B cell (primary cell): ENCODE measurements at regions of chr6 and their contacts with region 1.

Region 1: GRCh38 chr6:90315354-90315950 is 18.8 kb upstream of the BACH2 start:
- DNase-seq: peak; percentile 84
- ATAC-seq: peak; percentile 85
- H3K4me3 ChIP-seq: peak overlapping the region in 3 of 5 experiments; percentile 16 to 40 (median 22)
- H3K4me3 Mint-ChIP-seq: peak overlapping the region; percentile 54
- H3K27ac ChIP-seq: peak overlapping the region; percentile 95
- H3K27ac Mint-ChIP-seq: peak overlapping the region; percentile 83
- H3K4me1 ChIP-seq: peaks cover 70 to 76% of the 10 kb centered on the region in 2 donors
- H3K4me1 Mint-ChIP-seq: peaks cover 71% of the 10 kb centered on the region
- H3K27me3 ChIP-seq: no peaks in the 10 kb centered on the region
- H3K27me3 Mint-ChIP-seq: no peaks in the 10 kb centered on the region
- CTCF ChIP-seq: no peak

Region 2: GRCh38 chr6:90015883-90016282 is 299.6 kb before region 1 on chr6:
- CTCF ChIA-PET with region 1: no interaction called
- POLR2A ChIA-PET with region 1: no interaction called
- intact Hi-C with region 1: no loop called
- DNase-seq: no peak
- ATAC-seq: no peak
- H3K4me3 ChIP-seq: no peak overlapping the region
- H3K4me3 Mint-ChIP-seq: no peak overlapping the region
- H3K27ac ChIP-seq: peak overlapping the region in 1 of 2 donors; percentile 21
- H3K27ac Mint-ChIP-seq: no peak overlapping the region
- H3K4me1 ChIP-seq: peaks cover 13 to 20% of the 10 kb centered on the region in 2 donors
- H3K4me1 Mint-ChIP-seq: peaks cover 23% of the 10 kb centered on the region
- H3K27me3 ChIP-seq: no peaks in the 10 kb centered on the region
- H3K27me3 Mint-ChIP-seq: no peaks in the 10 kb centered on the region
- CTCF ChIP-seq: no peak

Region 3: GRCh38 chr6:90028995-90029635 is 286.3 kb before region 1 on chr6:
- CTCF ChIA-PET with region 1: no interaction called
- POLR2A ChIA-PET with region 1: no interaction called
- intact Hi-C with region 1: no loop called
- DNase-seq: no peak
- ATAC-seq: no peak
- H3K4me3 ChIP-seq: no peak overlapping the region
- H3K4me3 Mint-ChIP-seq: no peak overlapping the region
- H3K27ac ChIP-seq: no peak overlapping the region
- H3K27ac Mint-ChIP-seq: no peak overlapping the region
- H3K4me1 ChIP-seq: peaks cover 0 to 12% of the 10 kb centered on the region in 2 donors
- H3K4me1 Mint-ChIP-seq: peaks cover 64% of the 10 kb centered on the region
- H3K27me3 ChIP-seq: no peaks in the 10 kb centered on the region
- H3K27me3 Mint-ChIP-seq: no peaks in the 10 kb centered on the region
- CTCF ChIP-seq: no peak

Region 4: GRCh38 chr6:90304308-90304707 is 11.1 kb before region 1 on chr6:
- CTCF ChIA-PET with region 1: interaction called, 5 read pairs
- POLR2A ChIA-PET with region 1: interaction called, 14 read pairs
- intact Hi-C with region 1: loop called (anchors 1 kb)
- DNase-seq: peak; percentile 75
- ATAC-seq: peak; percentile 90
- H3K4me3 ChIP-seq: peak overlapping the region in 1 of 5 experiments; percentile 26
- H3K4me3 Mint-ChIP-seq: peak overlapping the region; percentile 24
- H3K27ac ChIP-seq: peak overlapping the region; percentile 82 to 83
- H3K27ac Mint-ChIP-seq: peak overlapping the region; percentile 89
- H3K4me1 ChIP-seq: peaks cover 53 to 58% of the 10 kb centered on the region in 2 donors
- H3K4me1 Mint-ChIP-seq: peaks cover 52% of the 10 kb centered on the region
- H3K27me3 ChIP-seq: no peaks in the 10 kb centered on the region
- H3K27me3 Mint-ChIP-seq: no peaks in the 10 kb centered on the region
- CTCF ChIP-seq: no peak

Region 5: GRCh38 chr6:90350689-90351554 is 35.5 kb after region 1 on chr6:
- CTCF ChIA-PET with region 1: interaction called, 5 read pairs
- POLR2A ChIA-PET with region 1: interaction called, 5 read pairs
- intact Hi-C with region 1: loop called (anchors 1 kb)
- DNase-seq: peak; percentile 92
- ATAC-seq: peak; percentile 96
- H3K4me3 ChIP-seq: peak overlapping the region in 2 of 5 experiments; percentile 5 to 38
- H3K4me3 Mint-ChIP-seq: peak overlapping the region; percentile 54
- H3K27ac ChIP-seq: peak overlapping the region; percentile 83 to 95
- H3K27ac Mint-ChIP-seq: peak overlapping the region; percentile 86
- H3K4me1 ChIP-seq: peaks cover 27% of the 10 kb centered on the region in 2 donors
- H3K4me1 Mint-ChIP-seq: peaks cover 36% of the 10 kb centered on the region
- H3K27me3 ChIP-seq: no peaks in the 10 kb centered on the region
- H3K27me3 Mint-ChIP-seq: no peaks in the 10 kb centered on the region
- CTCF ChIP-seq: no peak

Region 6: GRCh38 chr6:90375681-90376439 is 60.4 kb after region 1 on chr6:
- CTCF ChIA-PET with region 1: interaction called, 3 read pairs
- POLR2A ChIA-PET with region 1: interaction called, 4 read pairs
- intact Hi-C with region 1: loop called (anchors 1 kb)
- DNase-seq: peak; percentile 95
- ATAC-seq: peak; percentile 95
- H3K4me3 ChIP-seq: peak overlapping the region in 4 of 5 experiments; percentile 16 to 48 (median 29)
- H3K4me3 Mint-ChIP-seq: peak overlapping the region; percentile 79
- H3K27ac ChIP-seq: peak overlapping the region; percentile 94 to 98
- H3K27ac Mint-ChIP-seq: peak overlapping the region; percentile 96
- H3K4me1 ChIP-seq: peaks cover 39 to 45% of the 10 kb centered on the region in 2 donors
- H3K4me1 Mint-ChIP-seq: peaks cover 64% of the 10 kb centered on the region
- H3K27me3 ChIP-seq: no peaks in the 10 kb centered on the region
- H3K27me3 Mint-ChIP-seq: no peaks in the 10 kb centered on the region
- CTCF ChIP-seq: no peak

Region 7: DNA sequence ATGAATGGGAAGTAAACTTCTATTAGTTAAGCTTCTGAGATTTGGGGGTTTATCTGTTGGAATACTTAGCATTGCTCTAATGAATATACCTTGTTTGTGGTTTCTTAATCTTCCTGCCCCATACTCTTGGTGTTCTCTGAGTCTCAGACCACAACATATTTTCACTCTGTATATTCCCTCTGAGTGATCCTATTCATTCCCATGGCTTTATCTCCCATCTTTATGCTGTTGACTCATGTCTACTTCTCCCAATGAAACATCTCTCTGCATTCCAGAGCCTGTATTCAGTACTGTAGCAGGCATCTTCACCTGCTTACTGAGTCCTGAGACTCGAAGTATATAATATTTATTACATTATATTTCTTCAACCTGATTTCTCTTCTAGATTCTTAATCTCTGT is 555.1 kb after region 1 on chr6:
- CTCF ChIA-PET with region 1: no interaction called
- POLR2A ChIA-PET with region 1: no interaction called
- intact Hi-C with region 1: no loop called
- DNase-seq: no peak
- ATAC-seq: no peak
- H3K4me3 ChIP-seq: no peak overlapping the region
- H3K4me3 Mint-ChIP-seq: no peak overlapping the region
- H3K27ac ChIP-seq: no peak overlapping the region
- H3K27ac Mint-ChIP-seq: no peak overlapping the region
- H3K4me1 ChIP-seq: no peaks in the 10 kb centered on the region
- H3K4me1 Mint-ChIP-seq: no peaks in the 10 kb centered on the region
- H3K27me3 ChIP-seq: no peaks in the 10 kb centered on the region
- H3K27me3 Mint-ChIP-seq: no peaks in the 10 kb centered on the region
- CTCF ChIP-seq: no peak